ENCODE measurements at regions of chr10 and their contacts with region 1.

Region 1: GRCh38 chr10:113058523-113058961 is 108.5 kb downstream of the TCF7L2 start:
- DNase-seq: peak; percentile 56
- H3K4me3 ChIP-seq: peak overlapping the region; percentile 38
- H3K27ac ChIP-seq: peak overlapping the region; percentile 91
- H3K27me3 ChIP-seq: no peaks in the 10 kb centered on the region
- CTCF ChIP-seq: no peak

Region 2: DNA sequence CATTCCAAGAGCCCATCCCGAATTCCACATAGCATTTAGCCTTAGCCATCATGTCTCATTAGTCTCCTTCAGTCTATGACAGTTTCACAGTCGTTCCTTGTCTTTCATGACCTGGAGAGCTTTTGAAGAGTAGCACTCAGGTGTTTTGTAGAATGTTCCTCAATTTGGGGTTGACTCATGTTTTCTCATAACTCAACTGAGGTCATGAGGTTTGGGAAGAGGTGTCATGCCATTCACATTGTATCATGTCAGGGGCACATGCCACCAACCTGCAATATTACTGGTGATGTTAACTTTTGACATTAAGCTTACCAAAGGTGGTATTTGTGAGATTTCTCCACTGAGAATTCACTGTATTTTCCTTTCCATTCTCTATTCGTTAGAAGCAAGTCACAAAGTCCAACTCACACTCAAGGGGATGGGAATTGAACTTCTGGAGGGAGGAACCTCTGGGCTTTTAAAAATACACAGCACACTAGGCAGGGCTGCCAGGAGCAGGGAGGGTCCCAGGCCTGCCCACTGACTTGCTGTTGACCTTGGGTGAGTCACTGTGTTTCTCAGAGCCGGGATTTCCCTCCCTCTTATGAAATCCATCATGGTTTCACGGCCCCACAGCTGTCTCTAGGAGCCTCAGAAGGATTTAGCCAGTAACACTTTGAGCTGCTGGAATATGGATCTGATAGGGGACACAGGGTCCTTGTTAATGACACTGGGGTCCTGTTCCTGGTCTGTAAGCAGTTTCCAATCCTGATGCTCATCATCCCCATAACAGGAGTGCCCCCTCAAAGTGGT is 182.9 kb before region 1 on chr10:
- CTCF ChIA-PET with region 1: no interaction called
- POLR2A ChIA-PET with region 1: interaction called, 17 read pairs
- DNase-seq: peak; percentile 34
- H3K4me3 ChIP-seq: no peak overlapping the region
- H3K27ac ChIP-seq: peak overlapping the region; percentile 49
- H3K27me3 ChIP-seq: no peaks in the 10 kb centered on the region
- CTCF ChIP-seq: no peak

Region 3: DNA sequence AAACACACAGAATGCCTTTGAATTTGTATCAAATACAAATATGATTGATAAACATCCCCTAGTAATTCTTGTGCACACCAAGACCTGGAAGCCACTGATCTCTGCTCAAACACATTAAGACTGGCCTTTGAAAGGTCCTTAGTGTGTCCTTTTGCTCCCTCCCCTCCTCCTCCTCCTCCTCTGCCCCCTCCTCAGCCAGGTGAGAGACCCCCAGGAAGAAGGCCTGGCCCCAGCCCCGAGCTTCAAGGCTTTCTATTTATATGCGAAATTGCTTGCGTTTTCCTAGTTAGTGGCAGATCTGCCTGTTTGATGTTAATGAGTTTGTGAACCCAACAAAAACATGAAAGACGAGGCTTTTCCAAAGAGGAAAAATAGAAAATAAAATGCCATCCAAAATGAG is 172.1 kb before region 1 on chr10:
- CTCF ChIA-PET with region 1: no interaction called
- POLR2A ChIA-PET with region 1: no interaction called
- DNase-seq: no peak
- H3K4me3 ChIP-seq: no peak overlapping the region
- H3K27ac ChIP-seq: no peak overlapping the region
- H3K27me3 ChIP-seq: peaks cover 18% of the 10 kb centered on the region
- CTCF ChIP-seq: no peak

Region 4: GRCh38 chr10:113073549-113074189 is 15.1 kb after region 1 on chr10:
- CTCF ChIA-PET with region 1: interaction called, 4 read pairs
- POLR2A ChIA-PET with region 1: interaction called, 10 read pairs
- DNase-seq: peak; percentile 83
- H3K4me3 ChIP-seq: no peak overlapping the region
- H3K27ac ChIP-seq: peak overlapping the region; percentile 78
- H3K27me3 ChIP-seq: no peaks in the 10 kb centered on the region
- CTCF ChIP-seq: no peak

Region 5: GRCh38 chr10:113126229-113127201 is 68.0 kb after region 1 on chr10:
- CTCF ChIA-PET with region 1: interaction called, 15 read pairs
- POLR2A ChIA-PET with region 1: no interaction called
- DNase-seq: peak; percentile 27
- H3K4me3 ChIP-seq: peak overlapping the region; percentile 48
- H3K27ac ChIP-seq: no peak overlapping the region
- H3K27me3 ChIP-seq: no peaks in the 10 kb centered on the region
- CTCF ChIP-seq: peak; percentile 41

Measured in AG04450 (cell line).